GM12878 (cell line): ENCODE measurements at regions of chr1 and their contacts with region 1.

Region 1: DNA sequence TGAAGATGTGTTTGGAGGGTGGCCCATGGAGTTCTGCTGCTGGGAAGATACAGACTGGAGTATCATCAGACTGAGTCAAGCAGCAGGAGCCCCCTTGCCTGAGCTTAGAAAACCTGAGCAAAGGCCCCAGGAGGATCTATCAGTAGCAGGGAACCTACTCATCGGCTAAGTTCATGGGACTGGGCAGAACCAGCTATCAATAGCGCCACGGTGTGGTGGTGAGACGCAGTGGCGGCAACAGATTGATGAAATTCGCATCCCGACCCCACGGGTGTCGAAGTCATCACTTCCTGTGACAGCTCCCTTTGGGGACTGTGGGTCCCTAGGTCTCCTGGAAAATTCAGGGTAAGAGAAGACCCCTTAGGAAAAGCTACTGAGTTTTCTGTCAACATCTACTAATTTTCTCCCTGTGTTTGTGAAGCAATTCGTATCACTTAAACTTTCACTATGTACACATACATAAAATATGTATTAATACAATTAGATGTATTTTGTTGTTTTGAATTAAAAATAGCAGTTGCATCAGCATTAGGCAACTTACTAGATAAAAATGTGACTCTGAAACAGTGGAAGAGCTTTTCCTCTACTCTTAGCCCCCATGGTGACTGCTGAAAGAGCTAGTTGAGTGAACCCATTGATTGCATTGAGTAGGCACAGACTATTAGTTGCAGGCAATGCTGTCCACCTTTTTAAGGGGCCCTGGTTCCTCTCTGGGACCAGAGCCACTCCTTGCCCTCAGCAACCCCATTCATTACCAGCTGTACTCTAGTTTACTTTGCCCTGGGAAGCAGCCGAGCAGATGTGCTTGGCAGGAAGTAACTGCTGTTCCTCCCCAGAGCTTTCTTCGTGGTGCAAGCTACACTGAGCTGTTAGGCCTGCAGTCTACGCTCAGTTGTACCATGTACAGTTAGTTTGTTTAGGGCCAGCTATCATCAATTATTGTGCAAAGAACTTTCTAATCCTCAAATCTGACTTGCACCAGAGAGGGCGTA is 7.3 kb upstream of the CACNA1S start:
- DNase-seq: no peak
- ATAC-seq: peak; percentile 76
- H3K4me3 ChIP-seq: no peak overlapping the region
- H3K27ac ChIP-seq: no peak overlapping the region
- H3K4me1 ChIP-seq: no peaks in the 10 kb centered on the region
- H3K27me3 ChIP-seq: peaks cover 2 to 4% of the 10 kb centered on the region in 2 experiments; a peak in 3 of 4 replicates
- CTCF ChIP-seq: peak; percentile 65 to 77 (median 76)
- EP300 ChIP-seq: no peak
- POLR2A ChIP-seq: no peak
- RAD21 ChIP-seq: peak; percentile 49

Region 2: GRCh38 chr1:200530623-200531261 is 588.8 kb before region 1 on chr1:
- CTCF ChIA-PET with region 1: interaction called, 10 read pairs
- POLR2A ChIA-PET with region 1: no interaction called
- RAD21 ChIA-PET with region 1: no interaction called
- SMC1A ChIA-PET with region 1: no interaction called
- in situ Hi-C with region 1: no loop called
- intact Hi-C with region 1: no loop called
- DNase-seq: no peak
- ATAC-seq: peak; percentile 21; the same call in 2 of the 3 replicates
- H3K4me3 ChIP-seq: no peak overlapping the region
- H3K27ac ChIP-seq: no peak overlapping the region
- H3K4me1 ChIP-seq: peaks cover 11% of the 10 kb centered on the region
- H3K27me3 ChIP-seq: no peaks in the 10 kb centered on the region
- CTCF ChIP-seq: no peak
- EP300 ChIP-seq: no peak
- POLR2A ChIP-seq: no peak
- RAD21 ChIP-seq: no peak

Region 3: DNA sequence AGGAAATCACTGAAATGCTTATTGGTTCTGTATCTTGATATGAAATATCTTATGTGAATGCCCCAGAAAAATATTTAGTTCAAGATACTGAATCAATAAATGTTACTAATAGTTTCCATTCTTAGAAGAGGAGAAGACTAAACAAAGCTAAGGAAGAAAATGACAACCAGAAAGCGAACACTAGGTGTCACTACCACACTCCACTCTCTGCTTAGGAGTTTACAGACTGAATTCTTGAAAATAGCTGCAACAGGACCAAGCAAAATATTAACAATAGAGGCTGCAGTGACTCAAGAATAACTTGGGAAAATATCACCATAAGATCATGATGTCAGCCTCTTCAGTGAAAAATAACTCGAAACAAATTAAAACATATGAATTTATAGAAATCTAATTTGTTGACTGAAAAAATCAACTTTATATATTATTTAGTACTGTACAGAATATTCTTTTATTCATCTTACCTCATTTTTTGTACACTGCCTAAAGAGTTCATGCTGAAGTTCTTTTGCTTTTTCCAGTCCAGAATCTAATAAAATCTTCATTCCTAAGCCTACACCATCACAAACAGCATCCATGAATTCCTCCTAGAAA is 560.5 kb before region 1 on chr1:
- CTCF ChIA-PET with region 1: interaction called, 16 read pairs
- POLR2A ChIA-PET with region 1: no interaction called
- RAD21 ChIA-PET with region 1: interaction called, 3 read pairs
- SMC1A ChIA-PET with region 1: interaction called, 3 read pairs
- in situ Hi-C with region 1: no loop called
- intact Hi-C with region 1: loop called (anchors 10 kb)
- DNase-seq: no peak
- ATAC-seq: peak; percentile 64
- H3K4me3 ChIP-seq: no peak overlapping the region
- H3K27ac ChIP-seq: no peak overlapping the region
- H3K4me1 ChIP-seq: peaks cover 17% of the 10 kb centered on the region
- H3K27me3 ChIP-seq: no peaks in the 10 kb centered on the region
- CTCF ChIP-seq: peak; percentile 56 to 77 (median 60)
- EP300 ChIP-seq: no peak
- POLR2A ChIP-seq: no peak
- RAD21 ChIP-seq: peak; percentile 82

Region 4: GRCh38 chr1:201050515-201051277 is 68.8 kb before region 1 on chr1:
- CTCF ChIA-PET with region 1: interaction called, 11 read pairs
- POLR2A ChIA-PET with region 1: no interaction called
- RAD21 ChIA-PET with region 1: no interaction called
- SMC1A ChIA-PET with region 1: no interaction called
- in situ Hi-C with region 1: no loop called
- intact Hi-C with region 1: no loop called
- DNase-seq: no peak
- ATAC-seq: peak; percentile 22; the same call in 2 of the 3 replicates
- H3K4me3 ChIP-seq: no peak overlapping the region
- H3K27ac ChIP-seq: no peak overlapping the region
- H3K4me1 ChIP-seq: no peaks in the 10 kb centered on the region
- H3K27me3 ChIP-seq: peaks cover 5 to 7% of the 10 kb centered on the region in 2 experiments; a peak in 3 of 4 replicates
- CTCF ChIP-seq: no peak
- EP300 ChIP-seq: no peak
- POLR2A ChIP-seq: no peak
- RAD21 ChIP-seq: no peak

Region 5: DNA sequence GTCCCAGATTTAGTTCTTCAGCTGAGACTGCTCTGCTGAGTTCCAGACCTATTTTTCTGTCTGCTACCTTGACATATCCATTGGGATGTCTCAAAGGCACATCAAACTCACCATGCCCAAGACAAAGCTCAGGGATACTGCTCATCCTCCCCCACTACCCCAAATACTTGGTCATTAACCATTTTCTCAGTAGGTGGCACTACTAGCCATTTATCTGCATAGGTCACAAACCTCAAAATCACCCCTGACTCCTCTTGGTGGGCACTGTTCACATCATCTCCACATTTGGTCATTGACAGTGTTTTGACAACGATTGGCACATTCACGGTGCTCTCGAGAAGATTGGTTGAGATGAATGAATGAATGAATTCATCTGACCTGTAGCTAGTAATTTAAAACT is 39.4 kb before region 1 on chr1:
- CTCF ChIA-PET with region 1: interaction called, 16 read pairs
- POLR2A ChIA-PET with region 1: no interaction called
- RAD21 ChIA-PET with region 1: interaction called, 9 read pairs
- SMC1A ChIA-PET with region 1: interaction called, 3 read pairs
- in situ Hi-C with region 1: no loop called
- intact Hi-C with region 1: no loop called
- DNase-seq: no peak
- ATAC-seq: peak; percentile 40; the same call in 1 of the 3 replicates
- H3K4me3 ChIP-seq: no peak overlapping the region
- H3K27ac ChIP-seq: no peak overlapping the region
- H3K4me1 ChIP-seq: no peaks in the 10 kb centered on the region
- H3K27me3 ChIP-seq: peaks cover 0 to 4% of the 10 kb centered on the region in 2 experiments; a peak in 2 of 4 replicates
- CTCF ChIP-seq: no peak; a peak in 1 of 6 replicates
- EP300 ChIP-seq: no peak
- POLR2A ChIP-seq: no peak
- RAD21 ChIP-seq: no peak

Region 6: GRCh38 chr1:201108614-201109013 is 10.9 kb before region 1 on chr1:
- CTCF ChIA-PET with region 1: interaction called, 17 read pairs
- POLR2A ChIA-PET with region 1: no interaction called
- RAD21 ChIA-PET with region 1: no interaction called
- SMC1A ChIA-PET with region 1: interaction called, 3 read pairs
- in situ Hi-C with region 1: no loop called
- intact Hi-C with region 1: no loop called
- DNase-seq: no peak
- ATAC-seq: peak; percentile 69
- H3K4me3 ChIP-seq: no peak overlapping the region
- H3K27ac ChIP-seq: no peak overlapping the region
- H3K4me1 ChIP-seq: no peaks in the 10 kb centered on the region
- H3K27me3 ChIP-seq: peaks cover 0 to 3% of the 10 kb centered on the region in 2 experiments; a peak in 2 of 4 replicates
- CTCF ChIP-seq: no peak
- EP300 ChIP-seq: no peak
- POLR2A ChIP-seq: no peak
- RAD21 ChIP-seq: no peak

Region 7: GRCh38 chr1:201245092-201245491 is 125.6 kb after region 1 on chr1:
- CTCF ChIA-PET with region 1: no interaction called
- POLR2A ChIA-PET with region 1: no interaction called
- RAD21 ChIA-PET with region 1: no interaction called
- SMC1A ChIA-PET with region 1: no interaction called
- in situ Hi-C with region 1: no loop called
- intact Hi-C with region 1: no loop called
- DNase-seq: no peak
- ATAC-seq: no peak
- H3K4me3 ChIP-seq: no peak overlapping the region
- H3K27ac ChIP-seq: no peak overlapping the region
- H3K4me1 ChIP-seq: no peaks in the 10 kb centered on the region
- H3K27me3 ChIP-seq: peaks cover 0 to 5% of the 10 kb centered on the region in 2 experiments; a peak in 1 of 4 replicates
- CTCF ChIP-seq: no peak
- EP300 ChIP-seq: no peak
- POLR2A ChIP-seq: no peak
- RAD21 ChIP-seq: no peak